ENCODE measurements at regions of chr7 and their contacts with region 1.

Region 1: GRCh38 chr7:8785077-8785476 is 351.7 kb downstream of the NXPH1 start:
- DNase-seq: no peak
- H3K4me3 ChIP-seq: no peak overlapping the region
- H3K27ac ChIP-seq: no peak overlapping the region
- H3K4me1 ChIP-seq: no peaks in the 10 kb centered on the region
- H3K27me3 ChIP-seq: no peaks in the 10 kb centered on the region
- CTCF ChIP-seq: no peak
- POLR2A ChIP-seq: no peak

Region 2: DNA sequence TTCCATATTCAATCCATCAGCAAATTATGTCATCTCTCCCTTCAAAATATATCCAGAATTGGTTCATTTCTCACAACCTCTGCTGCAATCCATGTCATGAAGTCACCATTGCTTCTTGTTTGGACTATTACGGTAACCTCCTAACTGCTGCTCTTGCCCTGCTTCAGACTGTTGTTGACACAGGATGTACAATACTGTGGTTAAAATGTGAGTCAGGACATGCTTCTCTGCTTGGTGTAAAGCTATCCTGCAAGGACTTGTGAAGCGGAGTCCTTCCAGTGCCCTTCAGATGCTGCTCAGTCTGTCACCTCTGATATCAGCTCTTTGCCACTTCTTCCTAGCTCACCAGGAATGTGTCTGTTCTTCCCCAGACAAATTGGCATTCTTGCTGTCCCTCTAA is 362.0 kb before region 1 on chr7:
- intact Hi-C with region 1: loop called in 1 of 2 experiments (anchors 10 kb)
- DNase-seq: no peak
- H3K4me3 ChIP-seq: no peak overlapping the region
- H3K27ac ChIP-seq: no peak overlapping the region
- H3K4me1 ChIP-seq: no peaks in the 10 kb centered on the region
- H3K27me3 ChIP-seq: no peaks in the 10 kb centered on the region
- CTCF ChIP-seq: no peak
- POLR2A ChIP-seq: no peak

Measured in adrenal gland (tissue), 19 donors.